ENCODE measurements at regions of chr2 and their contacts with region 1.

Region 1: DNA sequence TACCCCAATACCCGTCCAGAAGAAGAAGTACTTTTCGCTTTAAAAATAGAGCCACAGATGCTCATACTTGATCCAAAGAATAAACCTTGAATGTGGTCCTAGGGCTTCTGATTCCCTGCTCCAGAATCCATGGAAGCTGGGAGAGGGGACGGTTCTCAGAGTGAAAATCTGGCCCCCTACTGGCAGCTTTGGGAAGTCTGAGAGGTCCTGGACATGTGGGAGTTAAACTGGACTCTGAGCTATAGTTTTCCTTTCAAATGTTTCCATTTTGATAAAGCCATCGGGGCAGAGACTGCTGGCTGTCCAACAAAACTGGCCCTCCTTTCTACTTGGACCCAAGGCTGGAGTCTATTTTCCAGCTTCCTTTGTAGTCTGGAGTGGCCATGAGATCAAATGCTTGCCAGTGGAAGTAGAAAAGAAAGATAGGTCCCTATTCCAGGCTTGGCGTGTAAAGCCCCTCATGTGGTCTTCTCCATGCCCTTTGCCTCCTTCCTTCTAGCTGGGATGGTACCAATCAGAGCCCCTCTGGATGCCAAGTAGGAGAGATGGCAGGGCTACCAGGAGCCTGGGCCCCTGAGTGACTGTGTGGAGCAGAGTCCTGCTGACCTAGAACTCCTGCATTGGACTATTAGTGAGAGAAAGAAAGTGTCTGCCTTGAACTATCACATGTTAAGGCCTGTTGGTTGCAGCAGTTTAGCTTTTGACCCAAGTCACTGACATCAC is 37.7 kb upstream of the TBC1D8 start:
- DNase-seq: no peak
- H3K4me3 ChIP-seq: no peak overlapping the region
- CTCF ChIP-seq: peak; percentile 73

Region 2: GRCh38 chr2:101012706-101013181 is 176.1 kb before region 1 on chr2:
- CTCF ChIA-PET with region 1: interaction called, 18 read pairs
- POLR2A ChIA-PET with region 1: no interaction called
- DNase-seq: no peak
- H3K4me3 ChIP-seq: no peak overlapping the region
- CTCF ChIP-seq: peak; percentile 62

Region 3: GRCh38 chr2:101030863-101031554 is 157.8 kb before region 1 on chr2:
- CTCF ChIA-PET with region 1: interaction called, 63 read pairs
- POLR2A ChIA-PET with region 1: no interaction called
- DNase-seq: no peak
- H3K4me3 ChIP-seq: no peak overlapping the region
- CTCF ChIP-seq: no peak